Activated CD4-positive, alpha-beta memory T cell treated with anti-CD3 and anti-CD28 coated beads for 36 hours (primary cell): ENCODE measurements at regions of chr1 and their contacts with region 1.

Region 1: DNA sequence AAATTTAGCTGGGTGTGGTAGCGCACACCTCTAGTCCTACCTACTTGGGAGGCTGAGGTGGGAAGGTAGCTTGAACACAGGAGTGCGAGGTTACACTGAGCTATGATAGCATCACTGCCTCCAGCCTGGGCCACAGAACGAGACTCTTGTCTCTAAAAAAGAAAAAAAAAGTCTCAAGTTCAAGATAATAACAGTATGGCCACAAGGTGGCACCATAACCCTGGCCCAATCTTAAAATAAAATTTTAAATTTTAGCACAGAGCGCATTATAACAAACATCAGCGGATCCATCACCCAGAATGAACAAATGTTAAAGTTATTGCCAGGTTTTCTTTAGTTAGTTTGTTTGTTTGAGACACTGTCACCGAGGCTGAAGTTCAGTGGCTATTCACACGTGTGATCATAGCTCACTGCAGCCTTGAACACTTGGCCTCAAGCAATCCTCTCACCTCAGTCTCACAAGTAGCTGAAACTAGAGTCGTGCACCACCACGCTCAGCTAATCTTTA is 2.9 kb upstream of the HTR6 start:
- DNase-seq: peak; percentile 45
- H3K4me3 Mint-ChIP-seq: no peak overlapping the region
- H3K27ac Mint-ChIP-seq: no peak overlapping the region
- H3K4me1 Mint-ChIP-seq: peaks cover 20% of the 10 kb centered on the region
- H3K27me3 Mint-ChIP-seq: peaks cover 17% of the 10 kb centered on the region

Region 2: GRCh38 chr1:19643602-19644394 is 18.0 kb before region 1 on chr1 and contains the start of gene NBL1:
- CTCF ChIA-PET with region 1: interaction called, 23 read pairs
- POLR2A ChIA-PET with region 1: no interaction called
- intact Hi-C with region 1: no loop called
- DNase-seq: peak; percentile 78
- H3K4me3 Mint-ChIP-seq: peak within 1 kb of the TSS; percentile 87
- H3K27ac Mint-ChIP-seq: peak within 1 kb of the TSS; percentile 77
- H3K4me1 Mint-ChIP-seq: peaks cover 32% of the 10 kb centered on the region
- H3K27me3 Mint-ChIP-seq: peaks cover 9% of the 10 kb centered on the region
- total RNA-seq, gene NBL1: 25.0 to 31.3 TPM

Region 3: DNA sequence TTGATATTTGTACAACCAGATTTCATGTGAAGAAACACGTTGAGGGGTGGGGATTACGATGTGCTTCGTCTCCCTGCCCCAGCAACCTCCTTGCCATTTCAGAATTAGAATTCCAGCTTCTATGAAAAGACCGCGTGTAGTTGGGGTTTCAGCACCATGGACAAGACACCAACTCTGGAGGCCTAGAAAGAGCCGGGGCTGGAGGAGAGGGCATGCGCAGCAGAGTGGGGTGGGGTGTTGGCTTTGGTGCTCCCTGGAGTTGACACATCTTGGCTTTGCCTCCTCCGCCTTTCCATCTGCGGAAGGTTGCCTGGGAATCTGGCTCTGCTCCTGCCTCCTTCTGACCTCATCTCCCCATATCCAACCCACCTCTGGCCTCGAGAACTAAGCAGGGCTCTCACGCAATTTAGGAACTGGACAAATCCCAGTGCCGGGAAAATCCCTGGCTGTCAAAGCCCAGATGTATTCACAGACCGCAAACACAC is 14.7 kb after region 1 on chr1:
- CTCF ChIA-PET with region 1: interaction called, 25 read pairs
- POLR2A ChIA-PET with region 1: no interaction called
- intact Hi-C with region 1: no loop called
- DNase-seq: peak; percentile 31
- H3K4me3 Mint-ChIP-seq: no peak overlapping the region
- H3K27ac Mint-ChIP-seq: no peak overlapping the region
- H3K4me1 Mint-ChIP-seq: no peaks in the 10 kb centered on the region
- H3K27me3 Mint-ChIP-seq: peaks cover 2% of the 10 kb centered on the region

Region 4: GRCh38 chr1:19704247-19705113 is 42.7 kb after region 1 on chr1:
- CTCF ChIA-PET with region 1: interaction called, 195 read pairs
- POLR2A ChIA-PET with region 1: no interaction called
- intact Hi-C with region 1: loop called (anchors 1 kb)
- DNase-seq: peak; percentile 71
- H3K4me3 Mint-ChIP-seq: no peak overlapping the region
- H3K27ac Mint-ChIP-seq: no peak overlapping the region
- H3K4me1 Mint-ChIP-seq: peaks cover 6% of the 10 kb centered on the region
- H3K27me3 Mint-ChIP-seq: no peaks in the 10 kb centered on the region

Region 5: GRCh38 chr1:19811206-19811851 is 149.6 kb after region 1 on chr1:
- CTCF ChIA-PET with region 1: interaction called, 29 read pairs
- POLR2A ChIA-PET with region 1: no interaction called
- intact Hi-C with region 1: loop called (anchors 2 kb)
- DNase-seq: peak; percentile 77
- H3K4me3 Mint-ChIP-seq: no peak overlapping the region
- H3K27ac Mint-ChIP-seq: no peak overlapping the region
- H3K4me1 Mint-ChIP-seq: no peaks in the 10 kb centered on the region
- H3K27me3 Mint-ChIP-seq: no peaks in the 10 kb centered on the region